ENCODE measurements at regions of chr7 and their contacts with region 1.

Region 1: DNA sequence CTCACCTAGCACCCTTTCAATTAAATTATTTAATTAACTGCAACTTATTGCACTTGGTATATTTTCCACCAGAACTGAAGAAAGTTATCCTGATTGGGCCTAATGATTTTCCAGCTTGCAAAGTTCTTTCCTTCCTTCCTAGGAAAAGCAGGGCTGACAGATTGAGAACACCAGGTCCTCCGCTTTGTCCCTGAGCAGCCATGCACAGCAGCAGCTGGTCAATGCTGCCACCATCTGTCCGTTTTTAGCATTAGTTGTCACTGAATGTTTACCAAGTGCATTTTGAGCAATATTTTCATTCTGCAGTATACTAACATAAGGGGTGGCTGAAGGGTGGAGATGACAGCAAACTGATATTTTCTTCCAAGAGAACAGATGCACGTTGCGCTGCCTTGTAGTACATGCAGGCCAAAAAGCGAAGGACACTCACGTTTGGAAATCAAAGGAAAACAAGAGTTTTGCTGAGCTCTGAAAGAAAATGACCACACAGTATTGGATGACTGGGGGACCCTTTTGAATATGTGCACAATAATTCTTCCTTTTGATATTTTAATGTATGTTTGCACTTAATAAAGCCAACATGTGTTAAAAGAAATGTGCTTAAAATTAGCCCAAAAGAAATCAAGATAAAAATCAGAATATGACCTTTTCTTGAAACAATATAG is 248.8 kb upstream of the PTN start:
- DNase-seq: peak; percentile 38
- H3K4me3 Mint-ChIP-seq: no peak overlapping the region
- H3K27ac Mint-ChIP-seq: no peak overlapping the region
- H3K4me1 Mint-ChIP-seq: no peaks in the 10 kb centered on the region
- H3K27me3 Mint-ChIP-seq: peaks cover 2% of the 10 kb centered on the region

Region 2: GRCh38 chr7:136405931-136406777 is 1186.2 kb before region 1 on chr7:
- CTCF ChIA-PET with region 1: no interaction called
- intact Hi-C with region 1: loop called (anchors 10 kb)
- DNase-seq: peak; percentile 37
- H3K4me3 Mint-ChIP-seq: no peak overlapping the region
- H3K27ac Mint-ChIP-seq: no peak overlapping the region
- H3K4me1 Mint-ChIP-seq: peaks cover 5% of the 10 kb centered on the region
- H3K27me3 Mint-ChIP-seq: peaks cover 6% of the 10 kb centered on the region